Endothelial cell of umbilical vein (primary cell): ENCODE measurements at regions of chr6 and their contacts with region 1.

Region 1: GRCh38 chr6:148464319-148465010 is 121.8 kb downstream of the SASH1 start:
- DNase-seq: peak; percentile 86
- H3K4me3 ChIP-seq: no peak overlapping the region
- H3K27ac ChIP-seq: peak overlapping the region; percentile 42
- H3K4me1 ChIP-seq: peaks cover 37% of the 10 kb centered on the region
- H3K27me3 ChIP-seq: no peaks in the 10 kb centered on the region
- CTCF ChIP-seq: peak; percentile 76 to 94
- POLR2A ChIP-seq: no peak

Region 2: GRCh38 chr6:148021699-148022098 is 442.8 kb before region 1 on chr6:
- CTCF ChIA-PET with region 1: no interaction called
- POLR2A ChIA-PET with region 1: no interaction called
- dilution Hi-C with region 1: no loop called
- intact Hi-C with region 1: loop called (anchors 10 kb)
- DNase-seq: peak; percentile 91
- H3K4me3 ChIP-seq: peak overlapping the region in 2 of 3 experiments; percentile 3 to 18
- H3K27ac ChIP-seq: peak overlapping the region; percentile 87
- H3K4me1 ChIP-seq: peaks cover 18% of the 10 kb centered on the region
- H3K27me3 ChIP-seq: no peaks in the 10 kb centered on the region
- CTCF ChIP-seq: no peak
- POLR2A ChIP-seq: no peak

Region 3: GRCh38 chr6:148250975-148251685 is 213.3 kb before region 1 on chr6:
- CTCF ChIA-PET with region 1: no interaction called
- POLR2A ChIA-PET with region 1: interaction called, 3 read pairs
- dilution Hi-C with region 1: no loop called
- intact Hi-C with region 1: loop called (anchors 1 kb)
- DNase-seq: peak; percentile 42
- H3K4me3 ChIP-seq: no peak overlapping the region
- H3K27ac ChIP-seq: no peak overlapping the region
- H3K4me1 ChIP-seq: no peaks in the 10 kb centered on the region
- H3K27me3 ChIP-seq: no peaks in the 10 kb centered on the region
- CTCF ChIP-seq: peak in 1 of 2 donors; percentile 16
- POLR2A ChIP-seq: no peak

Region 4: DNA sequence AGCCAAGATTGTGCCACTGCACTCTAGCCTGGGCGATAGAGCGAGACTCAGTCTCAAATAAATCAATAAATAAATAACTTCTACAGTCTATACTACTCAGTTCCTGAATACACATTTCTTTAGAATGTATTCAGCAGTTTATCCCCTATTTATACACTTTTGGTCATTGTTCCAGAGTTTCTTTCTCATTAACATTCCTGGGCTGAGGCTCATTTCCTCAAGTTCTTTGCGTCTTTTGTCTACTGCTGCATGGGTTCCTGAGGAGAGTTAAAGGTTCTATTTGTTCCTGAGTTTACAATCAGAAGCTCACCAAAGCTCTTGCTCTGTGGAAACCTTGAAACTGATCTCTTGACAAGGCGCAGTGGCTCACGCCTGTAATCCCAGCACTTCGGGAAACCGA is 159.5 kb before region 1 on chr6:
- CTCF ChIA-PET with region 1: interaction called, 7 read pairs
- POLR2A ChIA-PET with region 1: no interaction called
- dilution Hi-C with region 1: no loop called
- intact Hi-C with region 1: loop called (anchors 1 kb)
- DNase-seq: peak; percentile 97
- H3K4me3 ChIP-seq: no peak overlapping the region
- H3K27ac ChIP-seq: peak overlapping the region; percentile 95
- H3K4me1 ChIP-seq: peaks cover 24% of the 10 kb centered on the region
- H3K27me3 ChIP-seq: no peaks in the 10 kb centered on the region
- CTCF ChIP-seq: no peak
- POLR2A ChIP-seq: no peak

Region 5: GRCh38 chr6:148407372-148407771 is 57.1 kb before region 1 on chr6:
- CTCF ChIA-PET with region 1: interaction called, 4 read pairs
- POLR2A ChIA-PET with region 1: no interaction called
- dilution Hi-C with region 1: no loop called
- intact Hi-C with region 1: loop called (anchors 1 kb)
- DNase-seq: peak; percentile 97
- H3K4me3 ChIP-seq: no peak overlapping the region
- H3K27ac ChIP-seq: peak overlapping the region; percentile 92
- H3K4me1 ChIP-seq: peaks cover 39% of the 10 kb centered on the region
- H3K27me3 ChIP-seq: no peaks in the 10 kb centered on the region
- CTCF ChIP-seq: no peak
- POLR2A ChIP-seq: no peak